Endothelial cell of umbilical vein (primary cell): ENCODE measurements at regions of chr3 and their contacts with region 1.

Region 1: GRCh38 chr3:186540221-186540834 is 3.9 kb downstream of the CRYGS start:
- DNase-seq: peak; percentile 82
- H3K4me3 ChIP-seq: no peak overlapping the region
- H3K27ac ChIP-seq: peak overlapping the region; percentile 46
- H3K4me1 ChIP-seq: peaks cover 20% of the 10 kb centered on the region
- H3K27me3 ChIP-seq: no peaks in the 10 kb centered on the region
- CTCF ChIP-seq: peak; percentile 43 to 66
- POLR2A ChIP-seq: no peak

Region 2: GRCh38 chr3:185976977-185977678 is 563.2 kb before region 1 on chr3:
- CTCF ChIA-PET with region 1: interaction called, 187 read pairs
- POLR2A ChIA-PET with region 1: no interaction called
- dilution Hi-C with region 1: no loop called
- intact Hi-C with region 1: no loop called
- DNase-seq: peak; percentile 75
- H3K4me3 ChIP-seq: no peak overlapping the region
- H3K27ac ChIP-seq: no peak overlapping the region
- H3K4me1 ChIP-seq: peaks cover 6% of the 10 kb centered on the region
- H3K27me3 ChIP-seq: no peaks in the 10 kb centered on the region
- CTCF ChIP-seq: peak; percentile 85 to 93
- POLR2A ChIP-seq: no peak

Region 3: GRCh38 chr3:186241910-186242821 is 298.2 kb before region 1 on chr3:
- CTCF ChIA-PET with region 1: interaction called, 11 read pairs
- POLR2A ChIA-PET with region 1: no interaction called
- dilution Hi-C with region 1: no loop called
- intact Hi-C with region 1: no loop called
- DNase-seq: peak; percentile 33
- H3K4me3 ChIP-seq: no peak overlapping the region
- H3K27ac ChIP-seq: no peak overlapping the region
- H3K4me1 ChIP-seq: no peaks in the 10 kb centered on the region
- H3K27me3 ChIP-seq: no peaks in the 10 kb centered on the region
- CTCF ChIP-seq: peak; percentile 24 to 55
- POLR2A ChIP-seq: no peak

Region 4: GRCh38 chr3:186264608-186265400 is 275.5 kb before region 1 on chr3:
- CTCF ChIA-PET with region 1: interaction called, 124 read pairs
- POLR2A ChIA-PET with region 1: no interaction called
- dilution Hi-C with region 1: no loop called
- intact Hi-C with region 1: no loop called
- DNase-seq: no peak
- H3K4me3 ChIP-seq: no peak overlapping the region
- H3K27ac ChIP-seq: no peak overlapping the region
- H3K4me1 ChIP-seq: no peaks in the 10 kb centered on the region
- H3K27me3 ChIP-seq: no peaks in the 10 kb centered on the region
- CTCF ChIP-seq: no peak
- POLR2A ChIP-seq: no peak

Region 5: DNA sequence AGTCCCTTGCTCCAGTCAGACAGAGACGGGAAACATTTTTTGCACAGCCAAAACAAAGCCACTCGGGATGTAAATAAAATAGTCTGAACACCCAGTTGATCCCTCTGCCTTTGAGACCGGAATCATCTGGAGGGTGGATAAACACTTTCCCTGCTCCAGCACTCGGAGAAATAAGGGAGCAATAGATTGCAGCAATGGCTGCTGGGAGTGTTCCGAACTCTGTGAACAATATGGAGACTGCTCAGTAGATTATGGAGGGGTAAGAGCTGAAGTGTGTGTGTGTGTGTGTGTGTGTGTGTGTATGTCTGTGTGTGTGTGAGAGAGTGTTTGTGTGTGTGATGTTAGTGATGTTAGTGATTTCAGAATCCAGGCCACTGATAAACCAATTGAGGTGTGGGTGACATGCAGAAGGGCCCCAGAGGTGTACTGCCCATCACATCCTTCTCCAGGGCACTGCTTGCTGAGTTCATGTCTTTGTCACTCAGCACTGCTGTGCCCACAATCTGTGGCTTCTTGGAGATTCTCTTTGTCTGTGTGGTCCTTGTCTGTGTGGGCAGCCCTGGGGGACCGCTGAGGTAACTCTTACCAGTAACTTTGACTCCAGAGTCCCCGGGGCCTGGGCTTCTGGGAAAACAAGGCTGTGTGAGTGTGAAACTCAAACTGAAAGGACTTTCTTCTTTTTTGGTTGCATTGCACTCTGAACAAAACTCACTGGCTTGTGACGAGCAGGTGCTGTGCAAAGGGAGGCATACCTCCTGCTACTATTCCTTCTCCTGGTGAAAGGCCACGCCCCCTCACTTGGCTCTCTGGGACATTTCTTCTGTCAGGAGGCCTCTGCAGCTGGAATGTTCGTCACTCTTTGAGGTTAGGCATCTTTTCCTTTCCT is 19.1 kb before region 1 on chr3:
- CTCF ChIA-PET with region 1: interaction called, 13 read pairs
- POLR2A ChIA-PET with region 1: no interaction called
- dilution Hi-C with region 1: no loop called
- intact Hi-C with region 1: no loop called
- DNase-seq: no peak
- H3K4me3 ChIP-seq: no peak overlapping the region
- H3K27ac ChIP-seq: no peak overlapping the region
- H3K4me1 ChIP-seq: no peaks in the 10 kb centered on the region
- H3K27me3 ChIP-seq: no peaks in the 10 kb centered on the region
- CTCF ChIP-seq: no peak
- POLR2A ChIP-seq: no peak

Region 6: DNA sequence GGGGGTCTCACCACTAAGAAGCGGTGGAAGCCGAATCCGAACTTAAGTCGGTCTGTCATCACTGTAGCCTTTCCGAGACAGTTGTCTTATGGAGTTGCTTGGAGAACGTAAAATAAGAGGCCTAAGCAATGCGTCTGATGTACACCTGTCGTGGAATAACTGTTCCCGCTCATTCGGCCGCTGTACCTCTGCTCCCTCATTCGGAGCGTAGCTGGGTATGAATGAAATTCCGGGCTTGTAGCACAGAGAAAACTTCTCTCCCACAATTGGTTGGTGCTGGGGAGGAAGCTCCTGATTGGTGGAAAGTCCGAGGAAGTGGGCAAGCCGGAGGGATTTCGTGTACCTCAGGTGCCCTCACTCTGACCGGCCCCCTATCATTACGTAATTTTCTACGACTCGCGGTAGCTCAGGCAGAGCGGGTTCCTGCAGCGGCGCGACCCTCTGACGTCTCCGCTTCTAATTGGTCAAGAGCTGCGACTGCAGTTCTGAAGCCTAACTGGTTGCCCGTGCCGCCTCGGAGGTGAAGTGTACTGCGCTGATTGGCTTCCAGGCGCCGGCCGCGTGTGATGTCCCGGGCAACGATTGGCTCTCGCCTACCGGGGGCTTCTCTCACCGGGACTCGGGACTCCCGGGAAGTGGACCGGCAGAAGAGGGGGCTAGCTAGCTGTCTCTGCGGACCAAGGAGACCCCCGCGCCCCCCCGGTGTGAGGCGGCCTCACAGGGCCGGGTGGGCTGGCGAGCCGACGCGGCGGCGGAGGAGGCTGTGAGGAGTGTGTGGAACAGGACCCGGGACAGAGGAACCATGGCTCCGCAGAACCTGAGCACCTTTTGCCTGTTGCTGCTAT is 30.0 kb after region 1 on chr3 and contains the start of gene DNAJB11:
- CTCF ChIA-PET with region 1: interaction called, 12 read pairs
- POLR2A ChIA-PET with region 1: interaction called, 3 read pairs
- dilution Hi-C with region 1: no loop called
- intact Hi-C with region 1: loop called (anchors 2 kb)
- DNase-seq: peak; percentile 100
- H3K4me3 ChIP-seq: peak within 1 kb of the TSS; percentile 80 to 91 (median 90)
- H3K27ac ChIP-seq: peak within 1 kb of the TSS; percentile 67
- H3K4me1 ChIP-seq: peaks cover 18% of the 10 kb centered on the region
- H3K27me3 ChIP-seq: no peaks in the 10 kb centered on the region
- CTCF ChIP-seq: no peak
- POLR2A ChIP-seq: peak; percentile 87
- total RNA-seq, gene DNAJB11: 87.6 and 100 TPM in 2 replicates

Region 7: GRCh38 chr3:186640473-186640818 is 100.1 kb after region 1 on chr3:
- CTCF ChIA-PET with region 1: no interaction called
- POLR2A ChIA-PET with region 1: no interaction called
- dilution Hi-C with region 1: no loop called
- intact Hi-C with region 1: no loop called
- DNase-seq: no peak
- H3K4me3 ChIP-seq: no peak overlapping the region
- H3K27ac ChIP-seq: no peak overlapping the region
- H3K4me1 ChIP-seq: no peaks in the 10 kb centered on the region
- H3K27me3 ChIP-seq: peaks cover 0 to 3% of the 10 kb centered on the region in 2 experiments
- CTCF ChIP-seq: no peak
- POLR2A ChIP-seq: no peak